ENCODE measurements at regions of chr15 and their contacts with region 1.

Region 1: GRCh38 chr15:82680200-82681102 is 29.2 kb downstream of the AP3B2 start:
- DNase-seq: peak; percentile 74 to 94 (median 82)
- ATAC-seq: peak; percentile 98
- H3K4me3 ChIP-seq: peak overlapping the region; percentile 91
- H3K4me3 Mint-ChIP-seq: peak overlapping the region; percentile 94
- H3K27ac ChIP-seq: peak overlapping the region; percentile 70 to 74
- H3K27ac Mint-ChIP-seq: peak overlapping the region; percentile 95
- H3K4me1 ChIP-seq: peaks cover 19% of the 10 kb centered on the region
- H3K4me1 Mint-ChIP-seq: peaks cover 15% of the 10 kb centered on the region
- H3K27me3 ChIP-seq: no peaks in the 10 kb centered on the region
- H3K27me3 Mint-ChIP-seq: no peaks in the 10 kb centered on the region
- CTCF ChIP-seq: peak; percentile 35

Region 2: GRCh38 chr15:82709421-82710207 is 29.2 kb after region 1 on chr15 and contains the start of gene AP3B2:
- CTCF ChIA-PET with region 1: no interaction called
- POLR2A ChIA-PET with region 1: no interaction called
- intact Hi-C with region 1: loop called in 1 of 2 experiments (anchors 1 kb)
- DNase-seq: peak; percentile 38 to 84 (median 60)
- ATAC-seq: peak; percentile 92
- H3K4me3 ChIP-seq: peak within 1 kb of the TSS; percentile 54
- H3K4me3 Mint-ChIP-seq: peak within 1 kb of the TSS; percentile 70
- H3K27ac ChIP-seq: no peak within 1 kb of the TSS
- H3K27ac Mint-ChIP-seq: no peak within 1 kb of the TSS
- H3K4me1 ChIP-seq: peaks cover 17% of the 10 kb centered on the region
- H3K4me1 Mint-ChIP-seq: no peaks in the 10 kb centered on the region
- H3K27me3 ChIP-seq: peaks cover 11 to 22% of the 10 kb centered on the region in 2 experiments
- H3K27me3 Mint-ChIP-seq: peaks cover 32% of the 10 kb centered on the region
- CTCF ChIP-seq: no peak
- total RNA-seq, gene AP3B2: 0.25 to 0.98 TPM

Region 3: DNA sequence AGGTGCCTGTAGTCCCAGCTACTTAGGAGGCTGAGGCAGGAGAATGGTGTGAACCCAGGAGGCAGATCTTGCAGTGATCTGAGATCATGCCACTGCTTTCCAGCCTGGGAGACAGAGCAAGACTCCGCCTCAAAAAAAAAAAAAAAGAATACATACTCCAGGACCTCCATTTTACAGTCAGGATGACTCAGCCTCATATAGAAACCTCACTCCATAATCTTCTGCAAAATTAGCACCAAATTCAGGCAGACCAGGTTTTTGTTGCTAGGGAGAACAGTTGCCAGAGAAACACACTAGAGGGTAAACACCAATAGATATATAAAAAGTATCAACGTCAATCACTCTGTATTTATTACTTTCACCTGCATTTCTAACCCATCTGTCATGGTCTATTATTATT is 57.5 kb after region 1 on chr15:
- CTCF ChIA-PET with region 1: no interaction called
- POLR2A ChIA-PET with region 1: no interaction called
- intact Hi-C with region 1: no loop called
- DNase-seq: no peak
- ATAC-seq: no peak
- H3K4me3 ChIP-seq: no peak overlapping the region
- H3K4me3 Mint-ChIP-seq: no peak overlapping the region
- H3K27ac ChIP-seq: no peak overlapping the region
- H3K27ac Mint-ChIP-seq: no peak overlapping the region
- H3K4me1 ChIP-seq: no peaks in the 10 kb centered on the region
- H3K4me1 Mint-ChIP-seq: no peaks in the 10 kb centered on the region
- H3K27me3 ChIP-seq: no peaks in the 10 kb centered on the region
- H3K27me3 Mint-ChIP-seq: no peaks in the 10 kb centered on the region
- CTCF ChIP-seq: no peak

Region 4: DNA sequence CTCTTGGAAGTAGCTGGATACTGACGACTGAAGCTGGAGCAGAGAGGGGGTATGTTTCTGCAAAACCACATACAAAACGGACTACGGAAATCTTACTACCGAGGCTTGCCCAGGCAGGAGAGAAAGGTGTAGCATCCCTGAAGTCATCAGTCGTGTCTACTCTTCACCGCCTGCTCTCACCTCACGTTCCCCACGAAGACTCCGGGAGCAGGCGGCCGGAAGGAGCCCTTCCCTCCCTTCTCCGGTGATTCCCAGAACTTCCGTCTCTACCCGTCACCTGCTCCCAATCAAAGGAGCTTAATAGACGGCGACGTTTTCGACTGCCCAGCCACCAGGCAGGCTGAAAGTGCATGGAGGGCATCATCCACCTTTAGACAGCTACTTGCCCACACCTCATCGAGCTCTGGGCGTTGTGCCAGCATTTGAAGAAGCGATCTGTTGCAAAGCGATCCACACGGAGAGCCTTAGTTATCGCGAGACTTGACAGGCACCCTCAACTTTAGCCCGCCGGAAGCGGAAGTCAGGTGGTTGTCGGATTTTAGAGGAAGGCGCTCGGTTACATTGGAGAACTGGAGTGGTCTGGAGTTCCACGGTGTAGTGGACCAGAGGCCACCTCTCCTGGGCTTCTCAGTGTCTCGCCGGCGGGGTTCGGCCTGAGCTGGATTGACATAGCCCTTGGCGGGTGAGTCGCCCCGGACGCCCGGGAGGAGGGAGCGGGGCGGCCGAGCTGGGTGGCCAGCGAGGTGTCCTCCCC is 305.4 kb after region 1 on chr15 and contains the start of gene RAMAC:
- CTCF ChIA-PET with region 1: no interaction called
- POLR2A ChIA-PET with region 1: interaction called, 7 read pairs
- intact Hi-C with region 1: loop called in 1 of 2 experiments (anchors 5 kb)
- DNase-seq: peak; percentile 84 to 98 (median 92)
- ATAC-seq: peak; percentile 92
- H3K4me3 ChIP-seq: peak within 1 kb of the TSS; percentile 94
- H3K4me3 Mint-ChIP-seq: peak within 1 kb of the TSS; percentile 97
- H3K27ac ChIP-seq: peak within 1 kb of the TSS; percentile 54 to 65
- H3K27ac Mint-ChIP-seq: peak within 1 kb of the TSS; percentile 87
- H3K4me1 ChIP-seq: peaks cover 18% of the 10 kb centered on the region
- H3K4me1 Mint-ChIP-seq: peaks cover 27% of the 10 kb centered on the region
- H3K27me3 ChIP-seq: no peaks in the 10 kb centered on the region
- H3K27me3 Mint-ChIP-seq: no peaks in the 10 kb centered on the region
- CTCF ChIP-seq: no peak
- total RNA-seq, gene RAMAC: 25.5 to 26.5 TPM

Region 5: GRCh38 chr15:83066734-83067637 is 386.5 kb after region 1 on chr15 and contains the start of gene BTBD1:
- CTCF ChIA-PET with region 1: no interaction called
- POLR2A ChIA-PET with region 1: interaction called, 3 read pairs
- intact Hi-C with region 1: loop called in 1 of 2 experiments (anchors 10 kb)
- DNase-seq: peak; percentile 53 to 90 (median 74)
- ATAC-seq: peak; percentile 73
- H3K4me3 ChIP-seq: peak within 1 kb of the TSS; percentile 82
- H3K4me3 Mint-ChIP-seq: peak within 1 kb of the TSS; percentile 88
- H3K27ac ChIP-seq: peak within 1 kb of the TSS; percentile 57 to 74
- H3K27ac Mint-ChIP-seq: peak within 1 kb of the TSS; percentile 81
- H3K4me1 ChIP-seq: peaks cover 22% of the 10 kb centered on the region
- H3K4me1 Mint-ChIP-seq: peaks cover 9% of the 10 kb centered on the region
- H3K27me3 ChIP-seq: no peaks in the 10 kb centered on the region
- H3K27me3 Mint-ChIP-seq: no peaks in the 10 kb centered on the region
- CTCF ChIP-seq: no peak
- total RNA-seq, gene BTBD1: 26.3 to 27.5 TPM